ENCODE measurements at regions of chr20 and their contacts with region 1.

Region 1: GRCh38 chr20:63537525-63538203 is 488 bp upstream of the PTK6 start:
- DNase-seq: peak; percentile 88 to 97 (median 92)
- ATAC-seq: peak; percentile 94
- H3K4me3 ChIP-seq: peak overlapping the region; percentile 68
- H3K4me3 Mint-ChIP-seq: peak overlapping the region; percentile 48 to 86 (median 75)
- H3K27ac ChIP-seq: peak overlapping the region; percentile 83
- H3K27ac Mint-ChIP-seq: peak overlapping the region; percentile 36 to 91 (median 78)
- H3K4me1 ChIP-seq: peaks cover 15 to 21% of the 10 kb centered on the region in 2 donors
- H3K4me1 Mint-ChIP-seq: peaks cover 0 to 11% (median 7%) of the 10 kb centered on the region in 7 donors
- H3K27me3 ChIP-seq: no peaks in the 10 kb centered on the region
- H3K27me3 Mint-ChIP-seq: no peaks in the 10 kb centered on the region

Region 2: DNA sequence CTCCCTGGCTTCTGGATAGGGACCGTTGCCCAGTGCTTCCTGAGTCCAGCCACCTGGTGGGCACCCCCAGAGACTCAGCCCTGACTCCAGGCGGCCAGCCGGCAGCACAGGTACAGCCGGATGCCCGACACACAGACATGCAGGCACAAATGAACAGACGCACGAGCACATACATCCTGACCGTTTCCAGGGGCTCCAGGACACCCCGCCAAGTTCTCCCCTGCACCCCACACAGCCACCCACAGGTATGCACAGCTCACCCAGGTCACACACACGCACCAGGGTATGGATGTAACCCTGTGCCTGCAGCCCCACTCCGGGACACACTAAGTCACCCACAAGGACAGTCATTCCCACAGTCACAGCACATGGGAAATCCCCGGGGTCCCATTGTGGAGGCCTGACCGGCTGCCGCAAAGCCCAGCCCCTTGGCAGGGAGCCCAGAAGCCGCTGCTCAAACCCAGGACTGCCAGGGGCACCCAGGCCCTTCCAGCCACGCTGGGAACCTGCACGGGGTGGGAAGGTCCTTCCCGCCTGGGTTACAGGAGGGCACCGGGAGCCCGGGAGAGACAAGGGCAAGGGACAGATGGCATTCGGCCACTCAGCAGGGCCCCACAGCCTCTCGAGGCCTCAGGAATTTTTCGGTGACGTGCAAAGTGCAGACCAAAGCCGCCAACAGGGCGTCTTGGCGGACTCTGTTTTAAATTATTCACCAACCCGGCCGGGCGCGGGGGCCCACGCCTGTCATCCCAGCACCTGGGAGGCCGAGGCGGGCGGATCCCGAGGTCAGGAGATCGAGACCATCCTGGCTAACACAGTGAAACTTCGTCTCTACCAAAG is 54.6 kb before region 1 on chr20:
- CTCF ChIA-PET with region 1: no interaction called
- POLR2A ChIA-PET with region 1: no interaction called
- intact Hi-C with region 1: no loop called
- DNase-seq: no peak
- ATAC-seq: no peak
- H3K4me3 ChIP-seq: no peak overlapping the region
- H3K4me3 Mint-ChIP-seq: no peak overlapping the region
- H3K27ac ChIP-seq: no peak overlapping the region
- H3K27ac Mint-ChIP-seq: no peak overlapping the region
- H3K4me1 ChIP-seq: no peaks in the 10 kb centered on the region
- H3K4me1 Mint-ChIP-seq: peaks cover 0 to 2% (median 0%) of the 10 kb centered on the region in 7 donors
- H3K27me3 ChIP-seq: no peaks in the 10 kb centered on the region
- H3K27me3 Mint-ChIP-seq: peaks cover 16 to 38% (median 20%) of the 10 kb centered on the region in 5 donors

Region 3: GRCh38 chr20:63495741-63496595 is 41.7 kb before region 1 on chr20:
- CTCF ChIA-PET with region 1: no interaction called
- POLR2A ChIA-PET with region 1: interaction called, 4 read pairs
- intact Hi-C with region 1: loop called in 1 of 2 experiments (anchors 1 kb)
- DNase-seq: peak; percentile 43 to 82 (median 71)
- ATAC-seq: peak; percentile 72
- H3K4me3 ChIP-seq: no peak overlapping the region
- H3K4me3 Mint-ChIP-seq: peak overlapping the region; percentile 41 to 75 (median 66)
- H3K27ac ChIP-seq: no peak overlapping the region
- H3K27ac Mint-ChIP-seq: no peak overlapping the region
- H3K4me1 ChIP-seq: peaks cover 0 to 2% of the 10 kb centered on the region in 2 donors
- H3K4me1 Mint-ChIP-seq: peaks cover 0 to 4% (median 0%) of the 10 kb centered on the region in 7 donors
- H3K27me3 ChIP-seq: no peaks in the 10 kb centered on the region
- H3K27me3 Mint-ChIP-seq: peaks cover 0 to 28% (median 8%) of the 10 kb centered on the region in 5 donors

Region 4: GRCh38 chr20:63580796-63581461 is 43.3 kb after region 1 on chr20:
- CTCF ChIA-PET with region 1: interaction called, 18 read pairs
- POLR2A ChIA-PET with region 1: interaction called, 3 read pairs
- intact Hi-C with region 1: loop called (anchors 1 kb)
- DNase-seq: peak; percentile 30 to 87 (median 81)
- ATAC-seq: peak; percentile 96
- H3K4me3 ChIP-seq: no peak overlapping the region
- H3K4me3 Mint-ChIP-seq: peak overlapping the region in 1 of 10 donors; percentile 17
- H3K27ac ChIP-seq: no peak overlapping the region
- H3K27ac Mint-ChIP-seq: peak overlapping the region in 1 of 9 donors; percentile 74
- H3K4me1 ChIP-seq: peaks cover 0 to 10% of the 10 kb centered on the region in 2 donors
- H3K4me1 Mint-ChIP-seq: peaks cover 0 to 17% (median 14%) of the 10 kb centered on the region in 7 donors
- H3K27me3 ChIP-seq: no peaks in the 10 kb centered on the region
- H3K27me3 Mint-ChIP-seq: peaks cover 0 to 42% (median 0%) of the 10 kb centered on the region in 5 donors

Region 5: GRCh38 chr20:63707549-63708300 is 170.1 kb after region 1 on chr20 and contains the starts of genes ARFRP1 and ZGPAT:
- CTCF ChIA-PET with region 1: interaction called, 4 read pairs
- POLR2A ChIA-PET with region 1: no interaction called
- intact Hi-C with region 1: loop called (anchors 1 to 5 kb)
- DNase-seq: peak; percentile 77 to 92 (median 88)
- ATAC-seq: peak; percentile 92
- H3K4me3 ChIP-seq: peak within 1 kb of the TSS; percentile 91
- H3K4me3 Mint-ChIP-seq: peak within 1 kb of the TSS; percentile 86 to 95 (median 90)
- H3K27ac ChIP-seq: peak within 1 kb of the TSS; percentile 81
- H3K27ac Mint-ChIP-seq: peak within 1 kb of the TSS; percentile 82 to 97 (median 87)
- H3K4me1 ChIP-seq: peaks cover 22 to 30% of the 10 kb centered on the region in 2 donors
- H3K4me1 Mint-ChIP-seq: peaks cover 33 to 61% (median 46%) of the 10 kb centered on the region in 7 donors
- H3K27me3 ChIP-seq: no peaks in the 10 kb centered on the region
- H3K27me3 Mint-ChIP-seq: no peaks in the 10 kb centered on the region
- total RNA-seq, gene ARFRP1: 55.4 to 92.1 (median 66.2) TPM
- total RNA-seq, gene ZGPAT: 42.9 to 49.9 (median 45.4) TPM

Region 6: DNA sequence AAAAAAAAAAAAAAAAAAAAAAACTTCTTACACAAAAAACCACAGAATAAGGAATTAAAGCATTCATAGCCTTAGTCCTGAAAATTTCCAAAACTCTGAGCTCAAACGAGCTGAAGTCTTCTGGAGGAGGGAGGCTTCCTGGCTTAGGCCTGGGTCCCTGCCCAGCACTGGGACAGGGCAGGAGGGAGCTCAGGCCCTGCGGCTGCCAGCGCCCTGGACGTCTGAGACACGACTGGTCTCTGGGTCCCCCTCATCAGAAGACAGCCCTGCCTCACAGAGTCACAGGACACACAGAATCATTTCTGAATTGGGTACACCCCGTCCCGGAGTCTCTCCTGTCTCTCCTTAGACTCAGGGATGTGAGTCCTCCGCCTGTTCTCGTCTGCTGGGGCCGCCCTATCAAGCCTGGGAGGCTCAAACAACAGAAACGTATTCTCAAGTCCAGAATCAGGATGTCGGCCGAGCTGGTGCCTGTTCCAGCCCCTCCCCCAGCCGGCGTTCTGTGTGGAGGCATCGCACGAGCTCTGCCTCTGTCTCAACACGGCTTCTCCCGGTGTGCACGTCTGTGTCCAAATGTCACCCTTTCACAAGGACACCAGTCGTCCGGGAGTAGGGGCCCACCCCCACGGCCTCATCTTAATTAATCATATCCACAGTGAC is 254.0 kb after region 1 on chr20:
- CTCF ChIA-PET with region 1: no interaction called
- POLR2A ChIA-PET with region 1: no interaction called
- intact Hi-C with region 1: loop called (anchors 1 kb)
- DNase-seq: no peak
- ATAC-seq: no peak
- H3K4me3 ChIP-seq: no peak overlapping the region
- H3K4me3 Mint-ChIP-seq: no peak overlapping the region
- H3K27ac ChIP-seq: no peak overlapping the region
- H3K27ac Mint-ChIP-seq: no peak overlapping the region
- H3K4me1 ChIP-seq: no peaks in the 10 kb centered on the region
- H3K4me1 Mint-ChIP-seq: peaks cover 0 to 7% (median 2%) of the 10 kb centered on the region in 7 donors
- H3K27me3 ChIP-seq: no peaks in the 10 kb centered on the region
- H3K27me3 Mint-ChIP-seq: peaks cover 0 to 18% (median 0%) of the 10 kb centered on the region in 5 donors

Region 7: GRCh38 chr20:63973636-63974402 is 436.2 kb after region 1 on chr20:
- CTCF ChIA-PET with region 1: interaction called, 4 read pairs
- POLR2A ChIA-PET with region 1: no interaction called
- intact Hi-C with region 1: loop called (anchors 1 to 5 kb)
- DNase-seq: peak; percentile 59 to 89 (median 78)
- ATAC-seq: peak; percentile 81
- H3K4me3 ChIP-seq: no peak overlapping the region
- H3K4me3 Mint-ChIP-seq: peak overlapping the region in 5 of 10 donors; percentile 7 to 71 (median 36)
- H3K27ac ChIP-seq: peak overlapping the region; percentile 35
- H3K27ac Mint-ChIP-seq: peak overlapping the region; percentile 16 to 88 (median 71)
- H3K4me1 ChIP-seq: peaks cover 16 to 36% of the 10 kb centered on the region in 2 donors
- H3K4me1 Mint-ChIP-seq: peaks cover 34 to 63% (median 54%) of the 10 kb centered on the region in 7 donors
- H3K27me3 ChIP-seq: no peaks in the 10 kb centered on the region
- H3K27me3 Mint-ChIP-seq: peaks cover 0 to 2% (median 0%) of the 10 kb centered on the region in 5 donors

Region 8: GRCh38 chr20:64079273-64080012 is 541.8 kb after region 1 on chr20 and contains the start of gene RGS19:
- CTCF ChIA-PET with region 1: no interaction called
- POLR2A ChIA-PET with region 1: no interaction called
- intact Hi-C with region 1: loop called in 1 of 2 experiments (anchors 5 kb)
- DNase-seq: peak; percentile 59 to 86 (median 65)
- ATAC-seq: peak; percentile 63
- H3K4me3 ChIP-seq: peak within 1 kb of the TSS; percentile 89
- H3K4me3 Mint-ChIP-seq: peak within 1 kb of the TSS; percentile 81 to 98 (median 92)
- H3K27ac ChIP-seq: peak within 1 kb of the TSS; percentile 79
- H3K27ac Mint-ChIP-seq: peak within 1 kb of the TSS; percentile 78 to 94 (median 85)
- H3K4me1 ChIP-seq: peaks cover 22 to 34% of the 10 kb centered on the region in 2 donors
- H3K4me1 Mint-ChIP-seq: peaks cover 21 to 53% (median 39%) of the 10 kb centered on the region in 7 donors
- H3K27me3 ChIP-seq: no peaks in the 10 kb centered on the region
- H3K27me3 Mint-ChIP-seq: peaks cover 0 to 18% (median 0%) of the 10 kb centered on the region in 5 donors
- total RNA-seq, gene RGS19: 21.8 to 93.4 (median 23.6) TPM